T-cell (primary cell): ENCODE measurements at regions of chr5 and their contacts with region 1.

Region 1: DNA sequence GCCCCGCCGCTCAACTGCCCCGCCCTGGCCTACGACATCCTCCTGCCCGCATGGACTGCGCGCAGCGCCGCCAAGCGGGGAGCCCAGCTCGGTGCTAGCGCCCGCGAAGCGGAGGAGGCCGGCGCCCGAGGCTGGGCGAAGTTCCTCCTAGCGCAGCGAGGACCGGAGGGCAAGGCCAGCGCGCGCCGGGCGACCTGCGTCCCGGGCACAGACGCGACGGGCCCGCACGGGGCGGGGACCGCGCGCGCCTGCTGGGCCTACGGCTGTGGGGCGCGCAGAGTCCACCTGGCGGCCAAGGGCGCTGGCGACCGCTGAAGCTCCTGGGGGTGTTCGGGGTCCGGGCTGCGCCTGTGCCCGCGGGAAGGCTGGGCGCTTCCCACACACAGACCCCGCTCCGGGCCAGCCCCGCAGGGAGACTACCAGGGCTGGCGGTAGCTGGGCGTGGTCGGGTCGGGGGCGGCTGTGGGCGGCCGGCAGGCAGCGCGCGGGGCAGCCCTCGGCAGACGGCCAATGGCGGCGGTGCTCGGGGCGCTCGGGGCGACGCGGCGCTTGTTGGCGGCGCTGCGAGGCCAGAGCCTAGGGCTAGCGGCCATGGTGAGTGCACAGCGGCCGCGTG is at the start of gene PCBD2:
- DNase-seq: peak; percentile 82 to 94 (median 88)
- ATAC-seq: peak; percentile 85 to 90 (median 86)
- H3K4me3 ChIP-seq: peak within 1 kb of the TSS; percentile 69 to 84
- H3K4me3 Mint-ChIP-seq: peak within 1 kb of the TSS; percentile 85 to 91 (median 85)
- H3K27ac ChIP-seq: peak within 1 kb of the TSS; percentile 89
- H3K27ac Mint-ChIP-seq: peak within 1 kb of the TSS; percentile 98 to 99
- H3K4me1 ChIP-seq: peaks cover 3 to 18% of the 10 kb centered on the region in 2 experiments
- H3K4me1 Mint-ChIP-seq: peaks cover 6 to 11% (median 6%) of the 10 kb centered on the region in 3 donors
- H3K27me3 ChIP-seq: no peaks in the 10 kb centered on the region
- H3K27me3 Mint-ChIP-seq: no peaks in the 10 kb centered on the region
- total RNA-seq, gene PCBD2: 9.2 to 15.3 (median 11.8) TPM

Region 2: DNA sequence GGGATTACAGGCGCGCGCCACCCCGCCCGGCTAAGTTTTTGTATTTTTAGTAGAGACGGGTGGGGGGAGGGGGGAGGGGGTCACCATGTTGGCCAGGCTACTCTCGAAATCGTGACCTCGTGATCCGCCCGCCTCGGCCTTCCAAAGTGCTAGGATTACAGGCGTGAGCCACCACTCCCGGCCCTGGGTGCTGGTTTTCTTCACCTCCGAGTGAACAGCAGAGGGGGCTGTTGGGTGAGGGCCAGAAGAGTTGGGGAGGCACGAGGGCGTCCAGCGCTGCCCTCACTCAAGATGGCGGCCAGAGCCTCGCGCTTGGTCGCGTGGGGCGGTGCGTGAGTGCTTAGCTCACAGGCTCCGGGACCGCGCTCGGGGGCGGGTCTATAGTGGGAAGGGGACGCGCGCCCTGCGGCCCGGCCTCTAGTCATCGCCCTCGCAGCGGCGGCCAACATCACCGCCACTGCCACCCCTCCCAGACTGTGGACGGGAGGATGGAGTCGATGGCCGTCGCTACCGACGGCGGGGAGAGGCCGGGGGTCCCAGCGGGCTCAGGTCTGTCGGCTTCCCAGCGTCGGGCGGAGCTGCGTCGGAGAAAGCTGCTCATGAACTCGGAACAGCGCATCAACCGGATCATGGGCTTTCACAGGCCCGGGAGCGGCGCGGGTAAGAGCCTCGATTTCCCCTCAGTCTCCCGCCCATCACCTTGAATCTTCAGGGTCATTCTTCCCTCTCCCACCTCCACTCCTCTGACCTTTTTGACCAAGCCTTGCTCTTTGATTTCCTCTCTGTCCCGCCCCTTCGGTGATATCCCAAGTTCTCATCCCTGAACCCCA is 166.4 kb before region 1 on chr5 and contains the start of gene CAMLG:
- CTCF ChIA-PET with region 1: interaction called in 1 of 2 experiments, 12 read pairs
- POLR2A ChIA-PET with region 1: interaction called in 1 of 2 experiments, 4 read pairs
- DNase-seq: peak; percentile 92 to 99 (median 96)
- ATAC-seq: peak; percentile 96 to 98 (median 98)
- H3K4me3 ChIP-seq: peak within 1 kb of the TSS; percentile 73 to 76
- H3K4me3 Mint-ChIP-seq: peak within 1 kb of the TSS; percentile 90 to 95 (median 91)
- H3K27ac ChIP-seq: peak within 1 kb of the TSS; percentile 86
- H3K27ac Mint-ChIP-seq: peak within 1 kb of the TSS; percentile 83 to 96
- H3K4me1 ChIP-seq: peaks cover 9 to 26% of the 10 kb centered on the region in 2 experiments
- H3K4me1 Mint-ChIP-seq: peaks cover 25 to 36% (median 29%) of the 10 kb centered on the region in 3 donors
- H3K27me3 ChIP-seq: no peaks in the 10 kb centered on the region
- H3K27me3 Mint-ChIP-seq: no peaks in the 10 kb centered on the region
- total RNA-seq, gene CAMLG: 26.7 to 34.6 (median 32.5) TPM

Region 3: GRCh38 chr5:134864707-134865106 is 40.0 kb before region 1 on chr5:
- CTCF ChIA-PET with region 1: no interaction called
- POLR2A ChIA-PET with region 1: interaction called in 1 of 2 experiments, 12 read pairs
- DNase-seq: no peak
- ATAC-seq: no peak
- H3K4me3 ChIP-seq: no peak overlapping the region
- H3K4me3 Mint-ChIP-seq: no peak overlapping the region
- H3K27ac ChIP-seq: no peak overlapping the region
- H3K27ac Mint-ChIP-seq: no peak overlapping the region
- H3K4me1 ChIP-seq: no peaks in the 10 kb centered on the region
- H3K4me1 Mint-ChIP-seq: no peaks in the 10 kb centered on the region
- H3K27me3 ChIP-seq: no peaks in the 10 kb centered on the region
- H3K27me3 Mint-ChIP-seq: no peaks in the 10 kb centered on the region

Region 4: GRCh38 chr5:135196483-135196882 is 291.7 kb after region 1 on chr5:
- CTCF ChIA-PET with region 1: interaction called in 1 of 2 experiments, 10 read pairs
- POLR2A ChIA-PET with region 1: no interaction called
- DNase-seq: no peak
- ATAC-seq: no peak
- H3K4me3 ChIP-seq: no peak overlapping the region
- H3K4me3 Mint-ChIP-seq: no peak overlapping the region
- H3K27ac ChIP-seq: no peak overlapping the region
- H3K27ac Mint-ChIP-seq: no peak overlapping the region
- H3K4me1 ChIP-seq: peaks cover 0 to 2% of the 10 kb centered on the region in 2 experiments
- H3K4me1 Mint-ChIP-seq: peaks cover 0 to 2% (median under 1%) of the 10 kb centered on the region in 3 donors
- H3K27me3 ChIP-seq: peaks cover 9 to 15% of the 10 kb centered on the region in 2 experiments
- H3K27me3 Mint-ChIP-seq: peaks cover 19 to 28% of the 10 kb centered on the region in 2 donors